ENCODE measurements at regions of chr10 and their contacts with region 1.

Region 1: GRCh38 chr10:109987452-109988211 is 20.2 kb upstream of the ADD3 start:
- DNase-seq: no peak
- ATAC-seq: no peak
- H3K4me3 ChIP-seq: no peak overlapping the region
- H3K4me3 Mint-ChIP-seq: no peak overlapping the region
- H3K27ac ChIP-seq: no peak overlapping the region
- H3K27ac Mint-ChIP-seq: no peak overlapping the region
- H3K4me1 ChIP-seq: no peaks in the 10 kb centered on the region
- H3K4me1 Mint-ChIP-seq: no peaks in the 10 kb centered on the region
- H3K27me3 ChIP-seq: no peaks in the 10 kb centered on the region
- H3K27me3 Mint-ChIP-seq: no peaks in the 10 kb centered on the region
- CTCF ChIP-seq: no peak

Region 2: DNA sequence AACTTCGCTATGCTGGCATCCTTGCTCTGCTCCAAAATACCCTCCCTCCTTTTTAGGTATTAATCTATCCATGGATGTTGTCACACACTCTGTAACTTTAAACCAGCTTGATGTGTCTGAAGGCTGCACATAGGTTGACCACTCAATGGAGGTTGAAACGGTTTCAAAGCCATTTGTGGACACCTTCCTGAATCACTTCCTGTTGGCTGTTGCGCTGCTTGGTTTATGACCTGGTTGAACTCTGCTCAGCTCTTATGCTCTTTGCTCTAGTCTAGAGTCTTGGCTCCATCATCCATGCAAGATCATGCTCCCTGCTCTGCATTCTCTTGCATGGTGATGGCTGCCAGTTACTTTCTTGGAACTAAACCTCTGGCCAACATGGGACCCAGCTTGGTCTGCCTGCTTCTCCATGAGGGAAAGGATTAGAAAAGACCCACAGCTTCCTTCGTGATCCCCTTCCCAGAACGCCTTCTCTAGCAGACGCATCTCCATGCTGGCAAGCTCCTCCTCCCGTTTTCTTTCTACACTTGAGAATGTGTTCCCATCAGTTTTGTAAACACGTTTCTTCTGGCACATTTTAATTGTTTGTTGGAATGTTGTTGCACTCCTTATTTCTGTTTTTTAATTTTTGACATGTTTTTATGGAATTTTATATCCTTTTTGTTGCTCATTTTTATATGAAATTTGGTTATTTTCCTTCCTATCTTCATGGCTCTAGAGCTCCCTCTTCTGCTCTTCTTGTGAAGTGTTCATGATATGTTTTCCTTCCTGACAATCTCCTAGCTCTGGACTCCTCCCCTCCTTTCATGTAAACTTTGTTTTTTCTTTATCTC is 214.1 kb before region 1 on chr10:
- CTCF ChIA-PET with region 1: no interaction called
- POLR2A ChIA-PET with region 1: no interaction called
- intact Hi-C with region 1: no loop called
- DNase-seq: no peak
- ATAC-seq: no peak
- H3K4me3 ChIP-seq: no peak overlapping the region
- H3K4me3 Mint-ChIP-seq: no peak overlapping the region
- H3K27ac ChIP-seq: no peak overlapping the region
- H3K27ac Mint-ChIP-seq: no peak overlapping the region
- H3K4me1 ChIP-seq: no peaks in the 10 kb centered on the region
- H3K4me1 Mint-ChIP-seq: no peaks in the 10 kb centered on the region
- H3K27me3 ChIP-seq: peaks cover 3 to 6% of the 10 kb centered on the region in 2 experiments
- H3K27me3 Mint-ChIP-seq: no peaks in the 10 kb centered on the region
- CTCF ChIP-seq: peak; percentile 23

Region 3: DNA sequence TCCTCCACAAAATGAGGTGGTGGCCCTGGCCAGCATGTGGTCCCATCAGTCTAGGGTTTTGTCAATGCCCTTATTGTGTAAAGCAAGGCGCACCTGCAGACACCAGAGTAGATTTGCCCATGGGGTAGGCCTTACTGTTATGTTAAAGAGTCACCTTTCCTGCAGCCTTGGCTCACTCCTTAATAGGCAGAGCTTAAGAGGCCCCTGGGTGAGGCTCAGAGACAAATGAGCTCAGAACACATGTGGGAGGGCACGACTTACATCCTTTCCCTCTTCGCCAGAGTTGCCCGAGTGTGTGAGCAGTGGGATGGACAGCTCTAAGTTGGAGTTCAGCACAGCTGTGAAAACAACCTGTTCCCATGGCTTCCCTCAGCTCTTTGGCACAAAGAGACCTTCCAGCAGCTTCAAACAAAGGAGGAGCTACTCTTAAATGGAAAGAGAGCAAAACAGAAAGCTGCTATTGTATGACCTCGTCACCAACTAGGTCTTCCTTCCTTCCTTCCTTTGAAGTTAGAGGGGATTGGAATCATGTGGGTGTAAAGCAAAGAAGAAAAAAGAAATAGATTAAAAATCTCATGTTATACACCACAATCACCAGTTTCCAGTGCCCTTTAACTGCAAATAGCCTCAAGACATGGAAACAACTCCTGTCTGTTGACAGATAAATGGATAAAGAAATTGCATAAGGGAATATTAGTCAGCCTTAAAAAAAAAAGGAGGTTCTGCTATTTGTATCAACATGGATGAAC is 52.5 kb before region 1 on chr10:
- CTCF ChIA-PET with region 1: no interaction called
- POLR2A ChIA-PET with region 1: no interaction called
- intact Hi-C with region 1: no loop called
- DNase-seq: peak in 4 of 14 experiments; percentile 26 to 73 (median 38)
- ATAC-seq: peak; percentile 54
- H3K4me3 ChIP-seq: peak overlapping the region; percentile 30
- H3K4me3 Mint-ChIP-seq: peak overlapping the region; percentile 82
- H3K27ac ChIP-seq: peak overlapping the region; percentile 21 to 68
- H3K27ac Mint-ChIP-seq: peak overlapping the region; percentile 90
- H3K4me1 ChIP-seq: peaks cover 57% of the 10 kb centered on the region
- H3K4me1 Mint-ChIP-seq: peaks cover 77% of the 10 kb centered on the region
- H3K27me3 ChIP-seq: no peaks in the 10 kb centered on the region
- H3K27me3 Mint-ChIP-seq: no peaks in the 10 kb centered on the region
- CTCF ChIP-seq: no peak

Region 4: DNA sequence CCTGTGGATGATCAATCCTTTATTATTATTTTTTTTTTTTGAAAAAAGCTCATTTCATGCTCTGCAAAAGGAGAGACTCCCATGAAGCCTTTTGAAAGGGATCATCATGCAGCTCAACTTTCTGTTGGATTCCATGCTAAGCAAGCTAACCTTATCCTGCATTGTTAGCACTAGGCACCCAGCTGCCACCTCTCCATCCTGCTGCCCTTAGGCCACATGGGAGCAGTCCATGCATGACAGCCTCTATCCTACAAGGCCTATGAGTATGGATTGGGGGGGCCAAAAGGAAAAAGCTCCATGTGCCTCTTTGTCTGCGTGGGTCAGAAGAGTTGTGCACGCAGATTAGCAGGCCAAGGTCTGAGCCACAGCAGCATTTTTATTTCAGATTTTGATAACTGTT is 297.9 kb after region 1 on chr10:
- CTCF ChIA-PET with region 1: no interaction called
- POLR2A ChIA-PET with region 1: no interaction called
- intact Hi-C with region 1: loop called in 1 of 2 experiments (anchors 10 kb)
- DNase-seq: no peak
- ATAC-seq: no peak
- H3K4me3 ChIP-seq: no peak overlapping the region
- H3K4me3 Mint-ChIP-seq: no peak overlapping the region
- H3K27ac ChIP-seq: no peak overlapping the region
- H3K27ac Mint-ChIP-seq: no peak overlapping the region
- H3K4me1 ChIP-seq: no peaks in the 10 kb centered on the region
- H3K4me1 Mint-ChIP-seq: peaks cover 11% of the 10 kb centered on the region
- H3K27me3 ChIP-seq: no peaks in the 10 kb centered on the region
- H3K27me3 Mint-ChIP-seq: no peaks in the 10 kb centered on the region
- CTCF ChIP-seq: no peak